ENCODE measurements at regions of chr4 and their contacts with region 1.

Region 1: DNA sequence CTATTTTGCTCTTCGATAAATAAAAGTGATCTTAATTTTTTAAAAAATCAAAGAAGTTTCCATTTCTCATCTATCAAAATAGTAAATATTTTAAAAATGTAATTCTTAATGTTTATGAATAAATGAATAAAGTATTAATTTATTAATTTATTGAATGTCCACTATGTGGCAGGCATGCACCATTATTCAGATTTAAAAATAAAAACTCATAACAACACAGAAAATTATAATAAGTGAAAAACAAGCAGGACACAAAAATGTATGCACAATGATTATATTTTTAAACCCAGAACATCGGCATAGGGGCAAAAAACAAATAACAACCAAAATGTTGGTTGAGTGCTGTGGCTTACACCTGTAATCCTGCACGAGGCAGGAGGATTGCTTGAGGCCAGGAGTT is 5.3 kb upstream of the PYURF start:
- DNase-seq: no peak
- H3K4me3 Mint-ChIP-seq: no peak overlapping the region
- H3K27ac Mint-ChIP-seq: no peak overlapping the region
- H3K4me1 Mint-ChIP-seq: peaks cover 25% of the 10 kb centered on the region
- H3K27me3 Mint-ChIP-seq: no peaks in the 10 kb centered on the region

Region 2: GRCh38 chr4:88567591-88567990 is 38.7 kb after region 1 on chr4:
- CTCF ChIA-PET with region 1: interaction called, 4 read pairs
- intact Hi-C with region 1: loop called (anchors 1 kb)
- DNase-seq: no peak
- H3K4me3 Mint-ChIP-seq: no peak overlapping the region
- H3K27ac Mint-ChIP-seq: no peak overlapping the region
- H3K4me1 Mint-ChIP-seq: no peaks in the 10 kb centered on the region
- H3K27me3 Mint-ChIP-seq: peaks cover 3% of the 10 kb centered on the region